Heart left ventricle (tissue), 16 donors: ENCODE measurements at regions of chr17 and their contacts with region 1.

Region 1: GRCh38 chr17:33038740-33039139 is 47.1 kb downstream of the SPACA3 start:
- DNase-seq: peak; percentile 28 to 72 (median 35)
- ATAC-seq: peak; percentile 64 to 78 (median 68)
- H3K4me3 ChIP-seq: no peak overlapping the region
- H3K27ac ChIP-seq: peak overlapping the region in 1 of 12 donors; percentile 0
- H3K4me1 ChIP-seq: peaks cover 0 to 23% (median 15%) of the 10 kb centered on the region in 12 donors
- H3K27me3 ChIP-seq: peaks cover 0 to 23% (median 3%) of the 10 kb centered on the region in 9 donors
- CTCF ChIP-seq: peak; percentile 49 to 80 (median 65)
- POLR2A ChIP-seq: no peak

Region 2: DNA sequence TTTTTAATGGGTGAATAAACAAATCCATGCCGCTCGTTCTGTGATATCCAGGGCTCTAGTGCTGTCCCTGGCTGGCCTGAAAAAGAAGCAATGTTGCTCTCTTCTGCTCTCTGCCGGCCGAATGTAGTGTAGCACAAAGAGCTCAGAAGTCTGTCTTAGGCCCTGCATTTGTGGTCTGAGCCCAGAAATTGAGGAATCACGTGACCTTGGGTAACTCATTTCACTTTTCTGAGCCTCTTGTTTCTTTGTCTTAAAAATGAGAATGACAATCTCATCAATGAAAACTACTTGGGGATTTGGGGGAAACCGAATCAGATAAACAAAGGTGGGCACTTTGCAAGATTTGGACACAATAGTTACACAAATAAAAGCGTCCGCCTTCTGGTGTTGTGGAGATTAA is 635.9 kb after region 1 on chr17:
- intact Hi-C with region 1: loop called (anchors 5 to 10 kb)
- DNase-seq: peak in 4 of 5 donors; percentile 41 to 59 (median 44)
- ATAC-seq: peak; percentile 73 to 88 (median 87)
- H3K4me3 ChIP-seq: no peak overlapping the region
- H3K27ac ChIP-seq: no peak overlapping the region
- H3K4me1 ChIP-seq: no peaks in the 10 kb centered on the region
- H3K27me3 ChIP-seq: peaks cover 0 to 8% (median 0%) of the 10 kb centered on the region in 9 donors
- CTCF ChIP-seq: peak; percentile 63 to 87 (median 80)
- POLR2A ChIP-seq: no peak